ENCODE measurements at regions of chr10 and their contacts with region 1.

Region 1: DNA sequence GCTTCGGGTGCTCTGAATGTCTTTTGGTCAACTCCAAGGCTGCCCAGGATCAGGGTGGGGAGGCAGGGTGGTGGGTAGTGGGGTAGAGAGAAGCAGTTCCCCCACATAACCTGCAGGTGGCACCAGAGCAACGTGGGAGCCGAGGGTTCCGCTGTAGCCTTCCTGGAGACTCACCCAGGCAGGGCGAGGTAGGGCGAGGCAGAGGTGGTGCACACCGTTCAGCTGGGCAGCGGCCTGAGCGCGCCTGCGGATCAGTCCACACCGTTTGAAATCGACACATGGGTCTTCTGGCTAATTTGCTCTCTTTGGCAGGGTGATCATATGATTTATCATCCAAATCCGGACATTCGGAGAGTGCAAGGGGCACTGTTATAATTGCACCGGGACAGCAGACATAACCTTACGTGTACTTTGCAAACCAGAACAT is 41.4 kb upstream of the MAP3K8 start:
- H3K4me3 Mint-ChIP-seq: peak overlapping the region; percentile 50
- H3K27ac Mint-ChIP-seq: no peak overlapping the region
- H3K4me1 Mint-ChIP-seq: peaks cover 24% of the 10 kb centered on the region
- H3K27me3 Mint-ChIP-seq: no peaks in the 10 kb centered on the region

Region 2: GRCh38 chr10:30534465-30535144 is 142.0 kb after region 1 on chr10:
- intact Hi-C with region 1: loop called (anchors 1 kb)
- H3K4me3 Mint-ChIP-seq: no peak overlapping the region
- H3K27ac Mint-ChIP-seq: peak overlapping the region; percentile 29
- H3K4me1 Mint-ChIP-seq: peaks cover 61% of the 10 kb centered on the region
- H3K27me3 Mint-ChIP-seq: no peaks in the 10 kb centered on the region

Region 3: DNA sequence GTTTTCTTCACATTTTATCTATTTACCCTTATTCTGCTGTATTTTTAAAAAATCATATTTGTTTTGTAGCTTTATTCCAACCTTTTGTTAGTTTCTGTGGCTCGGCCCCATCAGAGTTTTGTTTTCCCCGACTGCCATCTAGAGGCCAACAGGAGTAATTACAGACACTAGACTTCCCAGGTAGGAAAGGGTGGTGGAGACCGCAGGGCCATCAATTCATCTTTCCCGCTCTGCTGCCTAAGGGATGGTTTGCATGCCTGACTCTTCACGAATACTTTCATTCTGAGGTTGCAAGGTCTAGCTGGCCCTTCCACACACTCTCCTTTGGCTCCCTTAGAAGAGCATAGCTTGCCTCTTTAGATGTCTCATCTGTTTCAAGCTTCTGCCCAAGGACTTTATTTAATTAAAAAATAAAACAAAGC is 198.7 kb after region 1 on chr10:
- intact Hi-C with region 1: loop called (anchors 1 kb)
- H3K4me3 Mint-ChIP-seq: no peak overlapping the region
- H3K27ac Mint-ChIP-seq: no peak overlapping the region
- H3K4me1 Mint-ChIP-seq: peaks cover 28% of the 10 kb centered on the region
- H3K27me3 Mint-ChIP-seq: peaks cover 6% of the 10 kb centered on the region